Posterior cingulate gyrus (tissue), 11 donors: ENCODE measurements at regions of chr2 and their contacts with region 1.

Region 1: GRCh38 chr2:26033818-26034636 is at the start of gene RAB10:
- DNase-seq: peak; percentile 98 to 100 (median 98)

Region 2: GRCh38 chr2:25673300-25674076 is 360.5 kb before region 1 on chr2 and contains the start of gene DTNB:
- intact Hi-C with region 1: loop called (anchors 10 kb)
- DNase-seq: peak; percentile 53 to 96 (median 67)

Region 3: GRCh38 chr2:25878361-25879132 is 155.5 kb before region 1 on chr2 and contains the start of gene ASXL2:
- intact Hi-C with region 1: loop called (anchors 5 kb)
- DNase-seq: peak; percentile 96 to 100 (median 97)

Region 4: DNA sequence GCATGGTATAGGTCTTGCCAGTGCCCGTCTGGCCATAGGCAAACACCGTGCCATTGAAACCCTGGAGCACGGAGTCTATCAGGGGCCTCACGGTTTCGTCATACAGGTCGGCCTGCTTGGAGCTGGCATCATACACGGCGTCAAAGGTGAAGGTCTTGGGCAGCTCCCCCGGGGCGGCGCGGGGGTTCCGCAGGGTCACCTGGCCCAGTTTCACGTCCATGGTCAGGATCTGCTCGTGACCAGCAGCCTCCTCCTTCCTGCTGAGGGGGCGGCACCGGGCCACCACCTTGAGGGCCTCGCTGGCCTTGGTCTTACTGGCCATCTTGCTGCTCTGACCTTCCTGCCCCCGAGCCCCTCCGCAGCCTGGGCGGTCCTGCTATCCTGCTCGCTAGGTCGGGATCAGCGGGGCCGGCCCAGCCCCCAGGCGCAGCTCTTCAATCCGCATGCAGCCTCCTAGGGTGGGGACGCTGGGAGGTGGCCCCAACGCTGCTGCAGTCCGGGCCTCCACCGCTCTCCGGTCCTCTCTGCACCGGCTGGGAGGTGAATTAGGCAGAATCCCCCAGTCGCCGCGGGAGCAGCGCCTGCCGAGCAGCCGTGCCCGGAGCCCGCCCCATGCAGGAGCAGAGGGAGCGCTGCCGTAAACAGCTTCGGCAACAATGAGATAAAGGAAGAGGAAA is 52.3 kb before region 1 on chr2:
- intact Hi-C with region 1: no loop called
- DNase-seq: peak in 4 of 10 donors; percentile 41 to 88 (median 78)

Region 5: DNA sequence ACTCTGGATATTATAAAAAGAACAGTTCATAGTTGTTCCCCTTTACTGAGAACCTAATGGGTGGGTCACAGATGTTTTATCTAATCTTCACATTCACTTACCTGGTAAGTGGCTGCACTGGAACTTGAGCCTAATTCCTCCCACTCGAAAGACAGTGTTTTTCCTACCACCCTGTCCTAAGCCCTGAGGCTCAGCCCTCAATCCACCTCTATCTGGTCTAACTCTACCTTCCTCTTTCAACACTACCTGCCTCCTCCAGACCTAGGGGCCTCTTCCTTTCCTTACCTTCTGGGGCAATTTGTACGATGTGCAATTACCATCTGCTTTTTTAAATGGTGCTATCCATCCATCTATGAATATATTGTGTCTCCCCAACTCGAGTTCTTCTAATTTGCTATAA is 42.1 kb before region 1 on chr2:
- intact Hi-C with region 1: loop called (anchors 5 kb)
- DNase-seq: no peak